ENCODE measurements at regions of chr15 and their contacts with region 1.

Region 1: DNA sequence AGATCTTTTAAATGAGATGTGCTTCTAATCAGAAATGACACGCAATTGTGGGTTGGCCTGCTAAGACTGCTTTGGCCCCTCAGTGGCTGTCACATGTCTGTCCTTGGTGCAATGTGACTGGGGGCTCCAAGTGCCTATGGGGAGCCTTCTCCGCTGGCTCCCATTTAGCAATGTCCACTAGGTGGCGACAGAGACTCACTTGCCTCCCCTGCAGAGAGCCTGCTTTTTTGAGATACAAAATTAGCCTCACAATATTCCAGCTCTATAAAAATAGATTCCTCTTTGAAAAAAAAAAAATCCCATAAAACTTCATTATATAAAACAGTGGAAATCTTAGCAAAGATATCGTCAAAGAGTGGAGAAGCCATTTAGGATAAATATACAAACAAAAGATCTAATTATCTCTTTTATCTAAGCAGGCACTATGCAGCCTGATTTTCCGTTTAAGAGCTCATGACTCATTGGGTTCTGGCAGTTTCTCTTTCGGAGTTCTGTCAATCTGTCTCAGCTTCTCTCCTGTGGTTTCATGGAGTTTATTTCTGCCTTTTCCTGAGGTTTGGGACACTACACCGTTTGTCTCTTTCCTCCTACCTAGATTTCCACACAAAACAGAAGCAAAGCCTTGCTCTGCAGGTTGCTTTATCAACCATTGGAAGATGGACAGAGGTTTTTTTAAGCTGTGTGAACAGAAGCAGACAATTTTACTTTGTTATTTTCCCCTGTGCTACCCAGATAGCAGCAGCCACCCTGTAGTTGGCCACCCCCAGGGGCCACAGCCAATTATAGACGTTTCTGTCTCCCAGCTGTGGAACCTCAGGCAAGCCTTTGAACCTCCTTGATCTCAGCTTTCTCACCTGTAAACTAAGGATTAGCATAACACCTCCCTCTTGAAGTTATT is 68.4 kb upstream of the TNFAIP8L3 start:
- DNase-seq: peak; percentile 75

Region 2: GRCh38 chr15:51132384-51133139 is 30.6 kb before region 1 on chr15:
- CTCF ChIA-PET with region 1: interaction called, 10 read pairs
- POLR2A ChIA-PET with region 1: no interaction called
- DNase-seq: peak; percentile 59

Region 3: GRCh38 chr15:51192521-51193280 is 29.6 kb after region 1 on chr15:
- CTCF ChIA-PET with region 1: interaction called, 25 read pairs
- POLR2A ChIA-PET with region 1: no interaction called
- DNase-seq: peak; percentile 70

Region 4: GRCh38 chr15:51312166-51313097 is 149.3 kb after region 1 on chr15:
- CTCF ChIA-PET with region 1: no interaction called
- POLR2A ChIA-PET with region 1: no interaction called
- DNase-seq: no peak

Region 5: GRCh38 chr15:51380999-51381795 is 218.1 kb after region 1 on chr15:
- CTCF ChIA-PET with region 1: interaction called, 27 read pairs
- POLR2A ChIA-PET with region 1: no interaction called
- DNase-seq: peak; percentile 63

Region 6: GRCh38 chr15:51401872-51402517 is 238.9 kb after region 1 on chr15:
- CTCF ChIA-PET with region 1: interaction called, 16 read pairs
- POLR2A ChIA-PET with region 1: no interaction called
- DNase-seq: peak; percentile 66

Region 7: DNA sequence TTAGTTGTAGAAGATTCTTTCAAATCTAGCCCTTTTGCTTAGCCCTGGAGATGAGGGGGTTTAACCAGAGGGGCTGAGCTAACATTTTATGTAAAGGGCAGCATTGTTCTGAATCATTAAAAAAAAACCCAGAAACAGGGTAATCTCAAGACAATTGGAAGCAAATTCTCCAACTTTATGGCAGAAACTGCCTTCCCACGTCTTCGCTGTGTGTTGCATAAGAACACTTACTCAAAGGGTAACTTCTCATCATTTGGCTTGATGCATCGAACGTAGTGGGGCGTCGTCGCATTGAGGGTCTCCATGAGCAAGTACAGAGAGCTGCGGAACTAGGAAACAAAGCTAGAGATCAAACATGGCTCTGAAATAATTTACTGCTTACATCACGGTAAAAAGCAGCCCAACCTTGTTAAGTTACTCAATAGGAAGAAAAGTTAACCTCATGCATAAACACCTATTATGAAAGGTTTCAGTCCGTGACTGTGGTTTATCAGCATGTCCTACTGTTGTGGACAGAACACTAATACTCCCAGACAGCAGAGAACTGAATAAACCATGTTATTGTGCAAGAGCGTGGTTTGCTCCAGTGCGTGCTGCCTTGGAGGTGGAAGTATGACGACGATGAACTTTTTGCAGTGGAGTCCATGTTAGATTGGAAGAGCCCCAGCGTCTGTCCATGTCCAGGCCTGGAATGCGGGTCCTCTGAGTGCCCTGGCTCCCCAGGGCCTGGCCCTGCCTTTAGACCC is 1083.7 kb after region 1 on chr15:
- CTCF ChIA-PET with region 1: no interaction called
- POLR2A ChIA-PET with region 1: no interaction called
- DNase-seq: no peak